Activated CD4-positive, alpha-beta T cell treated with anti-CD3 and anti-CD28 coated beads, Interleukin-2, amount 10 ng/mL, durations not matched to agents 24 days and 14 days (primary cell): ENCODE measurements at regions of chr1 and their contacts with region 1.

Region 1: DNA sequence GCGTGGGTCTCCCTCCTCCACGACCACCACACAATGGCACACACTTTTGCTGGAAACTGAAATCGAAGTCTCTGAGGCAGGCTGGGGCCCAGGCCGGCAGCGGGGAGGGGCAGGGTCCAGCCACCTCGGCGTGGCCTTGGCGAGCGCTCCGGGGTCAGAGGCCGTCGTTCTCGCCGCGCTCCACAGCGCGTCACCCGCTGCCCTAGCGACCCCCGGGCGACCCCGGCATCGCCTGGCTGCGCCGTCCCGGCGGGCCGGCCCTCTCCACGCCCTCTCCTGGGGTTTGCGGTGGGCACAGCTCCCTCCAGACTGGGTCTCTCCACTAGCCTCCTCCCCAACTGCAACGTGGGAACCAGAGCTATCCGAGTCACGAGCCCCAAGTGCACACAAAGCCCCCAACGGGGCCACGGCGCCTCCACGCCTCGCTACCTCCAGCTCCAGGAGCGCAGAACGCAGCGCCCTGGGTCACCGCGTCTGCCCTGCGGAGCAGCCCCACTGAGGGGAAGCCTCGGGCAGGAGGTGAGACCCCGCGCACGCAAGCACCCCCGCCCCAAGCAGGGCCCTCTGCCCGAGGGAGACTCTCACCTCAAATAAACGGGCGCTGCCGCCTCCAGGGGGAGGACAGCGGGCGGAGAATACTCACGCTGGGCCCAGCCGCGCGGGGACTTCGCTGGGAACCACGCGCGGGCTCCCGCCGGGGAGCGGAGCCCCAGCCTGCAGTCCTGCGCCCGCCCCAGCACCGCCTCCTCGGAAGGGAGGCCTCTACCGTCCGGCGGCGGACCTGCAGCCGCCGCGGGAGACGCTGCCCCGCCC is 134.0 kb upstream of the BARHL2 start:
- DNase-seq: peak; percentile 91
- H3K4me3 Mint-ChIP-seq: peak overlapping the region; percentile 77
- H3K27ac Mint-ChIP-seq: no peak overlapping the region
- H3K4me1 Mint-ChIP-seq: peaks cover 12% of the 10 kb centered on the region
- H3K27me3 Mint-ChIP-seq: peaks cover 68% of the 10 kb centered on the region

Region 2: DNA sequence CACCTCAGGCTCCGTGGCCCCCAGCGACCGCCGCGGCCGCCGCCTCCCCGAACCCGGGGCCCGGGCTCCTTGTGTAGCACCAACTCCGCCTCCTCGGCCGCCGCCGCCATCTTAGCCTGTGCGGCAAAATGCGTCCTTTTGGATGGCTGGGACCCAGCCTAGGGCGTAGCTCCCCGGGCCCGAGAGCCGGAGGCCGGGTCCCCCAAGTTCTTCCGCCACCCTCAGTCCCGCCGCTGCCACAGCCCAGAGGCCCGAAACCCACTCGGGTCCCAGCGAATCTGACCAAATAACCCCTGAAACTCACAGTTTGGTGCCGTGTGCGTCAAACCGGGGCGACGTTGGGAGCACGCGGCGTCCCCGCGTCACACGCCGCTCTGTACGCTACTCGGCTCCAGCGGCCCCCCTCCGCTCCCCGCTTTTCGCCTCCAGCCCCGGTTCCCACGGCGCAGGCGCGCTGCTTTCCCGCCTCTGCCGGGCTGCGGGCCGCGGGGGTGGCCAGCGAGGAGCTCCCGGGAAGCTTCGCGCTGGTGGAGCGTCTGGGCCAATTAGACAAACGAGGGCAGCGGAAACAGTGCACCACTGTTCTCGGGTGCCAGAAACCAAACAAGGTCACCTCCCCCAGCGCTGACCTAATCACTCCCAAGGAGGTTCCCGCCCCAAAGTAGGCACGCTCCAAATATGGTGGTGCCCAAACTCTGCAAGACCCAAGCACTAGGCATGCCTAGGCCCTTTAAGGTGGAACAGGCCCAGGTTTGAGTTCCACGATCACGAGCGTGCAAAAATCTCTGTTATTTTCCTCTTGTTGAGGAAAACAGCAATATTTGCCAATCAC is 170.8 kb after region 1 on chr1 and contains the start of gene ZNF644:
- intact Hi-C with region 1: loop called (anchors 1 kb)
- DNase-seq: peak; percentile 96
- H3K4me3 Mint-ChIP-seq: peak within 1 kb of the TSS; percentile 96
- H3K27ac Mint-ChIP-seq: peak within 1 kb of the TSS; percentile 100
- H3K4me1 Mint-ChIP-seq: peaks cover 42% of the 10 kb centered on the region
- H3K27me3 Mint-ChIP-seq: peaks cover under 1% of the 10 kb centered on the region
- total RNA-seq, gene ZNF644: 57.0 and 57.7 TPM in 2 replicates